ENCODE measurements at regions of chr1 and their contacts with region 1.

Region 1: DNA sequence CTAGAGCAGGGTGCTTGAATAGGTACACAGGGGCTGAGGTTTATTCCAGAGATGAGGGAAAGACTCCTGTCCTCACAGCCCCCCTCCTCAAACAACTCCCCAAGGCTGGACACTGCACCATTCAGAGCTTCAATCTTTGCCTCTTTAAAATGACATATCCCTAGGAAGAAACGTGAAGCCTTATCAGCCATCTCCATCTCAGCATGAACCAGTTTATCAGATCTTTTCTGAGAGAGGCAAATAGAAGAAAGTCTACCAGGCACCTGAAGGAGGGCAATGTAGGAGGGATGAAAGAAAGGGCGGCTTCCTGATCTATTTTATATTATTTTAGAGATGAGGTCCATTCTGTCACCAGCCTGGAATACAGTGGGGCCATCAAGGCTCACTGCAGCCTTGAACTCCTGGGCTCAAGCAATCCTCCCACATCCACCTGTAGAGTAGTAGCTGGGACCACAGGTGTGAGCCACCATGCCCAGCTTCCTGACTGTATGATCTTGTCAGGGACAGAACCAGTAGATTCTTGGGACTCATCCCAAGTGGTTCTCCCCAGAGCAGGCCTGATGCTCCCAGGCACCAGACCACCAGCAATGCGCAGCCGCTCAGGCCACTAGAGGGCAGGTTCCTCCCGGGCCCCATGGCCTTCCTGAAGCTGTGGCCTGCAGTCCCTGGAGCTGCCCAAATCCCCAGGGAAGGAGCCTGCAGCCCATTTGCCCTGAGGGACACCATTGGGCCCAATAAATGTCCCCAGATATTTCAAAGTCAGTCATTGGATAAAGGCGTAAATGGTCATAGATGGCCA is 44.4 kb upstream of the GOLT1A start:
- DNase-seq: peak; percentile 74 to 85
- ATAC-seq: peak; percentile 86 to 93
- H3K4me3 ChIP-seq: no peak overlapping the region
- H3K27ac ChIP-seq: peak overlapping the region; percentile 7 to 31; a peak in 1 of 6 replicates
- H3K4me1 ChIP-seq: peaks cover 35% of the 10 kb centered on the region
- CTCF ChIP-seq: peak; percentile 83
- EP300 ChIP-seq: no peak
- POLR2A ChIP-seq: no peak
- RAD21 ChIP-seq: peak; percentile 90 to 92

Region 2: GRCh38 chr1:204207136-204207616 is 51.0 kb before region 1 on chr1:
- CTCF ChIA-PET with region 1: interaction called, 15 read pairs
- POLR2A ChIA-PET with region 1: no interaction called
- DNase-seq: peak; percentile 37 to 84
- ATAC-seq: peak; percentile 89 to 99
- H3K4me3 ChIP-seq: no peak overlapping the region
- H3K27ac ChIP-seq: no peak overlapping the region
- H3K4me1 ChIP-seq: peaks cover 2% of the 10 kb centered on the region; the same call in 1 of the 3 replicates
- CTCF ChIP-seq: peak; percentile 87
- EP300 ChIP-seq: no peak
- POLR2A ChIP-seq: no peak
- RAD21 ChIP-seq: peak; percentile 65 to 69

Region 3: DNA sequence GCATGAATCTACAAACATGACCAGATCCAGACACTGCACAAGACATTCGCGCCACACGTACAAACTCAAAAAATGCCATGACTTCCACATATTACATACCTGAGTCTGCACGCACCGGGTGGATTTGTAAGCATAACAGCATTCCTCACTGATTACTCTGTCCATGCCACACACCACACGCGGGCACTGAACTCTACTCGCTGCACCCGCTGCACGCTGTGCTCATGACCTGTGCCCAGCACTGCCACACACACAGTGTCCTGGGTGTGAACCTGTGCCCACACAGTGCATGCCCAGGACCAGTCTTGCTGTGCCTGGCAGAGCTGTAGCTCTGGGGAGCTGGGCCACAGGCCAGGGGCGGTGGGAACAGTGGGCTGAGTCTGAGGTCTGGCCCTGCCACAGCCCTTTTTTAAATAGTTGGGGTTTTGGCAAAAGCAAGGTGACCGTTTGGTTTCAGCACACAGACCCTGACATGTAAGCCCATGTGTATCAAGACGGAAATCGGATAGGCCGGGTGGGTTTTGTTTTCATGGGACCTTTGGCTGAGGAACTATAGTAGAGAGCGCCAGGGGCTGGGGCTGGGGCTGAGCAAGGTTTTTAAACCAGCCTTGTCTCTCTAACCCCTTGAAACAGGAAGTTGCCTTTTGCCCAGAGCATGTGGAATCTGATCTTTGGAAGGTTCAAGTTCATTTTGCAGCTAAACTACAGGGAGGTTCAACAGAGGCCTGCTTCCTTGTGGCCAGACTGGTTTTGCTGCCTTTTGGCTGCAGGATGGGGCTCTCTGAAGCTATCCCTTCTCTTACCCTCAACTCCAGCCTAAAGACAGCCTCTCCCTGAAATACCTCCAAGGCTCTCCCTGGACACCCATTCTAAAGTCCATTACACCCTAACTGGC is 32.1 kb before region 1 on chr1:
- CTCF ChIA-PET with region 1: interaction called, 28 read pairs
- POLR2A ChIA-PET with region 1: no interaction called
- DNase-seq: no peak
- ATAC-seq: no peak
- H3K4me3 ChIP-seq: no peak overlapping the region
- H3K27ac ChIP-seq: no peak overlapping the region
- H3K4me1 ChIP-seq: no peaks in the 10 kb centered on the region
- CTCF ChIP-seq: no peak
- EP300 ChIP-seq: no peak
- POLR2A ChIP-seq: no peak
- RAD21 ChIP-seq: no peak

Region 4: DNA sequence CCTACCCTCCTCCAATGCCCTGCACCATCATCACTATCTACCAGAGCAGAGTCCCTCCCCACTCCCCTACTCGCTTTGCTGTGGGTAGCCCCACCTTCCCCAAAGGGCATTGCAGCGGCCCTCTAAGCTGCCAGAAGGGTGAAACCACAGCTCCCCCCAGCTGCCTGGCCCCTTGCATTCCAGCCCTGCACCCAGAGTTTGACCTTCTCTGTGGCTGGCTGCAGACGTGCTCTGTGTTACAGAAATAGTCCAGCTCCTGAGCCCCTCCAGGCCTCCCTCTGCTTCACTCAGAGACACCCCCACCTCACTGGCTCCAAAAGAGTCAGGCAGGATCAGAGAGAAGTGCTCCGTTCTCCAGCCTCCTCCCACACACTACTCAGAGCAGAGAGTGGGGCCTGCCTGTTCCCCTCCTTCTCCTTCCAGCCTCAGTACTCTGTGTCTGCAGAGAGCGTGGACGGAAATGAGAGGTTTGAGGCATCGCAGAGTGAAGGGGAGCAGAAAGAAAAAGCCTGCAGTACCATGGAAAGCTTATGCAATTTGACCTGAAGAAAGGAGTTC is 38.4 kb after region 1 on chr1:
- CTCF ChIA-PET with region 1: interaction called, 22 read pairs
- POLR2A ChIA-PET with region 1: no interaction called
- DNase-seq: no peak
- ATAC-seq: peak in 1 of 2 experiments; percentile 47; a peak in 3 of 6 replicates
- H3K4me3 ChIP-seq: no peak overlapping the region
- H3K27ac ChIP-seq: peak overlapping the region; percentile 35 to 78
- H3K4me1 ChIP-seq: peaks cover 42% of the 10 kb centered on the region
- CTCF ChIP-seq: no peak
- EP300 ChIP-seq: no peak
- POLR2A ChIP-seq: no peak
- RAD21 ChIP-seq: no peak; a peak in 1 of 5 replicates

Region 5: DNA sequence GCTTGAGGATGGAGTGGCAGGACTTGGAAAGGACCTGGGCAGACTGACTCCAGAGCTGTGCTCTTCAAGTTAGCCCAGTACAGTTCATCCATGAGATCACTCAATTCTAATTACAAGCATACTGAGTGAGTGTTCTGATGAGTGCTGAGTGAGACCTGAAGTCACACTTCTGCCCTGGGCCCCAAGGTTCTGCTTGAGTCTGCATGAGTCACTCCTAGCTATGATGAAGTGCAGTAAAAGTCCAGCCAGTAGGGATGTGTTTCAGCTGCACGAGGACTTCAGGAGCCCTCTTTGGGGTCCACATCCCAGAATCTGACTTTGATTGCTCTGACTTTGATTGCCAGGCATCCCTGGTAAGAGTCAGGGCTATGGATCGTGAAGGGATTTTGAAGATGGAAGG is 65.7 kb after region 1 on chr1:
- CTCF ChIA-PET with region 1: interaction called, 14 read pairs
- POLR2A ChIA-PET with region 1: no interaction called
- DNase-seq: peak; percentile 44 to 45
- ATAC-seq: peak; percentile 31 to 41; a peak in 2 of 6 replicates
- H3K4me3 ChIP-seq: no peak overlapping the region
- H3K27ac ChIP-seq: peak overlapping the region; percentile 46 to 66; a peak in 5 of 6 replicates
- H3K4me1 ChIP-seq: peaks cover 53% of the 10 kb centered on the region
- CTCF ChIP-seq: no peak
- EP300 ChIP-seq: no peak
- POLR2A ChIP-seq: no peak
- RAD21 ChIP-seq: no peak

Region 6: GRCh38 chr1:204398217-204399081 is 140.3 kb after region 1 on chr1:
- CTCF ChIA-PET with region 1: interaction called, 15 read pairs
- POLR2A ChIA-PET with region 1: no interaction called
- DNase-seq: peak; percentile 93 to 96
- ATAC-seq: peak; percentile 92 to 99
- H3K4me3 ChIP-seq: no peak overlapping the region
- H3K27ac ChIP-seq: no peak overlapping the region
- H3K4me1 ChIP-seq: peaks cover 7% of the 10 kb centered on the region; the same call in 2 of the 3 replicates
- CTCF ChIP-seq: peak; percentile 88
- EP300 ChIP-seq: no peak
- POLR2A ChIP-seq: no peak
- RAD21 ChIP-seq: peak; percentile 71 to 72